Caco-2 (cell line): ENCODE measurements at regions of chrX and their contacts with region 1.

Region 1: DNA sequence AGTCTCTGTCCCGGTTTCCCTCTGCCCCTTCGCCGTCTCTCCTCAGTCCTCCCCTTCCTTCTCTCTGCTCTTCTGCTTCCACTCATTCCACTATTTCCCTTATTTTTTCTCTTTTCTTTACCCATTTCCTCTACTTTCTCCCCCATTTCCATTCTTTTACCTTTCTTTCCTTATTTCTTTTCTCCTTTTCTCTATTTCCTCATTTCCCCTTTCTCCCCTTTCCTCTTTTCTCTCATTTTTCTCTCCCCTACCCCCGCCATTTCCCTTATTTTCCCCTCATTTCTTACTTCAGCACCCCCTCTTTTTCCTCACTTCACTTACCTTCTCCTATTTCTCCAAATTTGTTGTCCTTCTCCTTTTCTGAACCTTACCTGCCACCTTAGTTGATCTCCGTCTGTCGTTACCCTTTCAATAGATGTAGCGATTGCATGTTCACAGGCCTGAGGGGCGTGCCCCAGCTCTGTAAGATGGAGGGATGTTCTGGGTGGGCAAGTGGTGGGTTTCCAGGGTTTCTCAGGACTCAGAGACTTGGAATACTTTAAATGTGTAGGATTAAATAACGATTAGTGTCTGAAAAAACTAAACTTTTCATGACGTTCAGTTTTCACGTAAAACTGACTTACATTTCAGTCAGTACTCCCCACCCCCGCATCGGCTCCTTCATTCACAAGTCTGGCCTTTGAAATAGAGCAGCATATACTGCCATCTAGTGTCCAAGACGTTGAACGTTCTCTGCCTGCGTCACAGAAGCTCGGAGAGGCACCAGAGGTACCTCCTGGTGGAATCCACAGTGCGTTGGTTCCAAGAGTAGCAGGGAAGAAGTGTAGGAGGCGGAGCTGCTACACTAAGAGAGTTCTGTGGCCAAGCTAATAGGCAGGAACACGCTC is 641 bp upstream of the NCBP2L start:
- DNase-seq: peak; percentile 71 to 72
- H3K4me3 ChIP-seq: no peak overlapping the region
- H3K4me3 Mint-ChIP-seq: peak overlapping the region; percentile 66
- H3K27ac Mint-ChIP-seq: no peak overlapping the region
- H3K4me1 ChIP-seq: no peaks in the 10 kb centered on the region
- H3K4me1 Mint-ChIP-seq: peaks cover 12% of the 10 kb centered on the region
- H3K27me3 ChIP-seq: no peaks in the 10 kb centered on the region
- H3K27me3 Mint-ChIP-seq: peaks cover 8% of the 10 kb centered on the region
- CTCF ChIP-seq: peak; percentile 52 to 60

Region 2: GRCh38 chrX:107025545-107025944 is 751.3 kb before region 1 on chrX:
- CTCF ChIA-PET with region 1: no interaction called
- POLR2A ChIA-PET with region 1: no interaction called
- intact Hi-C with region 1: loop called (anchors 5 kb)
- DNase-seq: peak in 1 of 2 experiments; percentile 25
- H3K4me3 ChIP-seq: no peak overlapping the region
- H3K4me3 Mint-ChIP-seq: no peak overlapping the region
- H3K27ac Mint-ChIP-seq: no peak overlapping the region
- H3K4me1 ChIP-seq: no peaks in the 10 kb centered on the region
- H3K4me1 Mint-ChIP-seq: no peaks in the 10 kb centered on the region
- H3K27me3 ChIP-seq: no peaks in the 10 kb centered on the region
- H3K27me3 Mint-ChIP-seq: peaks cover 3% of the 10 kb centered on the region
- CTCF ChIP-seq: peak; percentile 50 to 55

Region 3: DNA sequence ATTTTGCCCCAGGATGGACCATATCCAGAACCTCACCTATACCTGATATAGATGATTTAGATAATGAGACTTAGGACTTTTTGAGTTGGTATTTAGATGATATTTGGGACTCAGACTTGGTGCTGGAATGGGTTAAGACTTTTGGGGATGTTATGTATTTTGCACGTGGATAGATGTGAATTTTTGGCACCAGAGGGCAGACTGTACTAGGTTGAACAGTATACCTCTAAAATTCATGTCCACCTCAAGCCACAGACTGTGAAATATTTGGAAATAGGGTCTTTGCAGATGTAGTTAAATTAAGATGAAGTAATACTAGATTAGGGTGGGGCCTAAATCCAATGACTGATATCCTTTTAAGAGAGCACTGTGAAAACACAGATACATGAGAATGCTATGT is 673.9 kb before region 1 on chrX:
- CTCF ChIA-PET with region 1: no interaction called
- POLR2A ChIA-PET with region 1: no interaction called
- intact Hi-C with region 1: loop called (anchors 1 kb)
- DNase-seq: peak in 1 of 2 experiments; percentile 1
- H3K4me3 ChIP-seq: no peak overlapping the region
- H3K4me3 Mint-ChIP-seq: no peak overlapping the region
- H3K27ac Mint-ChIP-seq: no peak overlapping the region
- H3K4me1 ChIP-seq: no peaks in the 10 kb centered on the region
- H3K4me1 Mint-ChIP-seq: no peaks in the 10 kb centered on the region
- H3K27me3 ChIP-seq: no peaks in the 10 kb centered on the region
- H3K27me3 Mint-ChIP-seq: no peaks in the 10 kb centered on the region
- CTCF ChIP-seq: peak in 1 of 2 experiments; percentile 26

Region 4: DNA sequence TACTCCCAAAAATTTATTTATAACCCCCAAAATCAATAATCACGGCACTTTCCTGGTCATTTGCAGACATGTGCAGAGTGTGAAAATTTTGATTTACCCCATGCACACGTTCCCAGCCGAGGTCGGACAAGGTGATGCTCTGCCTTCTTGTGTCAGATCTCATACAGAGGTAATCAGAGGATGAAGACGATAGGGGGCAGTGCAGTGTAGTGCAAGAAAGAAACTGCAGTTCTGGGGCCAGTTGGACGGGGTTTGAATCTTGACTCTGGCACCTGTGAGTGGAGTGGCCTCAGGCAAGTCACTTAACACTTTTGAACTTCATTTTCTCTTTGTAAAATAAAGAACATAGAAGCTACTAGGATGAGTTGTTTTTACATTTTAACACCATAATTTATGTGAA is 239.1 kb before region 1 on chrX:
- CTCF ChIA-PET with region 1: no interaction called
- POLR2A ChIA-PET with region 1: no interaction called
- intact Hi-C with region 1: loop called (anchors 10 kb)
- DNase-seq: peak in 1 of 2 experiments; percentile 30
- H3K4me3 ChIP-seq: no peak overlapping the region
- H3K4me3 Mint-ChIP-seq: no peak overlapping the region
- H3K27ac Mint-ChIP-seq: no peak overlapping the region
- H3K4me1 ChIP-seq: no peaks in the 10 kb centered on the region
- H3K4me1 Mint-ChIP-seq: peaks cover 3% of the 10 kb centered on the region
- H3K27me3 ChIP-seq: no peaks in the 10 kb centered on the region
- H3K27me3 Mint-ChIP-seq: peaks cover 9% of the 10 kb centered on the region
- CTCF ChIP-seq: no peak

Region 5: GRCh38 chrX:107654872-107655761 is 121.8 kb before region 1 on chrX:
- CTCF ChIA-PET with region 1: interaction called, 11 read pairs
- POLR2A ChIA-PET with region 1: no interaction called
- intact Hi-C with region 1: loop called (anchors 1 kb)
- DNase-seq: peak; percentile 30 to 38
- H3K4me3 ChIP-seq: no peak overlapping the region
- H3K4me3 Mint-ChIP-seq: no peak overlapping the region
- H3K27ac Mint-ChIP-seq: peak overlapping the region; percentile 32
- H3K4me1 ChIP-seq: no peaks in the 10 kb centered on the region
- H3K4me1 Mint-ChIP-seq: no peaks in the 10 kb centered on the region
- H3K27me3 ChIP-seq: no peaks in the 10 kb centered on the region
- H3K27me3 Mint-ChIP-seq: no peaks in the 10 kb centered on the region
- CTCF ChIP-seq: peak; percentile 23 to 29

Region 6: GRCh38 chrX:107718156-107718621 is 58.7 kb before region 1 on chrX:
- CTCF ChIA-PET with region 1: no interaction called
- POLR2A ChIA-PET with region 1: no interaction called
- intact Hi-C with region 1: loop called (anchors 2 kb)
- DNase-seq: peak; percentile 72 to 80
- H3K4me3 ChIP-seq: no peak overlapping the region
- H3K4me3 Mint-ChIP-seq: no peak overlapping the region
- H3K27ac Mint-ChIP-seq: peak overlapping the region; percentile 63
- H3K4me1 ChIP-seq: peaks cover 5% of the 10 kb centered on the region; the same call in 1 of the 2 replicates
- H3K4me1 Mint-ChIP-seq: peaks cover 6% of the 10 kb centered on the region
- H3K27me3 ChIP-seq: no peaks in the 10 kb centered on the region
- H3K27me3 Mint-ChIP-seq: no peaks in the 10 kb centered on the region
- CTCF ChIP-seq: peak; percentile 55 to 56

Region 7: GRCh38 chrX:107894038-107894437 is 117.1 kb after region 1 on chrX:
- CTCF ChIA-PET with region 1: interaction called, 3 read pairs
- POLR2A ChIA-PET with region 1: no interaction called
- intact Hi-C with region 1: loop called (anchors 5 kb)
- DNase-seq: peak in 1 of 2 experiments; percentile 42
- H3K4me3 ChIP-seq: no peak overlapping the region
- H3K4me3 Mint-ChIP-seq: no peak overlapping the region
- H3K27ac Mint-ChIP-seq: no peak overlapping the region
- H3K4me1 ChIP-seq: no peaks in the 10 kb centered on the region
- H3K4me1 Mint-ChIP-seq: no peaks in the 10 kb centered on the region
- H3K27me3 ChIP-seq: no peaks in the 10 kb centered on the region
- H3K27me3 Mint-ChIP-seq: no peaks in the 10 kb centered on the region
- CTCF ChIP-seq: peak; percentile 4 to 57